Transverse colon (tissue), 4 donors: ENCODE measurements at regions of chr1 and their contacts with region 1.

Region 1: DNA sequence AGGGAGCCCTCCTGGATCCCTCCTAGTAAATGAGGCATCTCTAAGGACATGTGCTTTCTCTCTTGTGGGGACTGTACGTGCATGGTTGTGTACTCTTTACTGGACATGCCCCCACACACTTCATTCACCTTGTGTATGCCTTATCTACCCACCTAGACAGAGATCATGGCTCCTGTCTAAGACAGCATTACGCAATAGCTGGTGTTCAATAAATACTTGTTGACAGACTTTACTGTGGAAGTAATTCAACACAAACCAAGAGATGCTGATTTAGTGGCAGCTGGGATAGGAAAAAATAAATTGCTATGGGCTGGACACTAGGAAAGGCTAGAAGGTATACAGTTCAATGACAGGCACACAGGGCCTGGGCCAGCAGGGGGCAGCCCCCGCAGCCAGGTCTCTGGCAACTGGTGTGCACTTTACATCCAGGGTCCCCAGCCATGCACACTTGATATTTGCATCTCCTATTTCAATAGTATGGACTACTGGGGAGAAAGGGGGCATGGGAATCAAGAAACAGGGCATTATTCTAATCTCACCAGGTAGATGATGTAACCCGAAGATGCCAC is 24.2 kb downstream of the TRABD2B start:
- DNase-seq: no peak
- H3K4me3 ChIP-seq: no peak overlapping the region
- H3K27ac ChIP-seq: no peak overlapping the region
- H3K4me1 ChIP-seq: no peaks in the 10 kb centered on the region
- H3K27me3 ChIP-seq: no peaks in the 10 kb centered on the region
- CTCF ChIP-seq: no peak
- EP300 ChIP-seq: no peak
- POLR2A ChIP-seq: no peak

Region 2: GRCh38 chr1:47871799-47872353 is 101.1 kb before region 1 on chr1:
- in situ Hi-C with region 1: no loop called
- intact Hi-C with region 1: no loop called
- DNase-seq: no peak
- H3K4me3 ChIP-seq: no peak overlapping the region
- H3K27ac ChIP-seq: no peak overlapping the region
- H3K4me1 ChIP-seq: peaks cover 0 to 13% (median 0%) of the 10 kb centered on the region in 4 donors
- H3K27me3 ChIP-seq: no peaks in the 10 kb centered on the region
- CTCF ChIP-seq: no peak
- EP300 ChIP-seq: no peak
- POLR2A ChIP-seq: no peak

Region 3: GRCh38 chr1:47951545-47952234 is 21.3 kb before region 1 on chr1:
- in situ Hi-C with region 1: no loop called
- intact Hi-C with region 1: no loop called
- DNase-seq: no peak
- H3K4me3 ChIP-seq: no peak overlapping the region
- H3K27ac ChIP-seq: no peak overlapping the region
- H3K4me1 ChIP-seq: peaks cover 0 to 7% (median 0%) of the 10 kb centered on the region in 4 donors
- H3K27me3 ChIP-seq: no peaks in the 10 kb centered on the region
- CTCF ChIP-seq: no peak
- EP300 ChIP-seq: no peak
- POLR2A ChIP-seq: no peak

Region 4: DNA sequence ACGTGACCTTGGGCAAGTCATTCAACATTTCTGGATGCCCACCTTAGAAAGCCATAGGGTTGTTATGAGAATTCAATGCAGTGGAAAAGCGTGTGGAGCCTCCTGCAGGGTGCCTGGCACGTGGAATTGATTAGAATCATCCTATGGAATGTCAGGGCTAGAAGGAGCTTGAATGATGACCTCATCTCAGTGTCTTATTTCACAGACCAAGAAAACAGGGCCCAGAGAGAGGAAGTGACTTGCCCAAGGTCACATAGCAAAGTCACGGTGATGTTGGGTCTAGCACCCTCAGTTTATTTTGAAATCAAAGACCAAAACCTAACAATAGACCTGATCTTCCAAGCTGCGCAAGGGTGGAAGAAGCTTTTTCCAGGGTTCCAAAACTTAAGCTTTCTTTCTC is 18.2 kb after region 1 on chr1:
- in situ Hi-C with region 1: no loop called
- intact Hi-C with region 1: loop called (anchors 1 kb)
- DNase-seq: no peak
- H3K4me3 ChIP-seq: no peak overlapping the region
- H3K27ac ChIP-seq: no peak overlapping the region
- H3K4me1 ChIP-seq: peaks cover 0 to 4% (median 0%) of the 10 kb centered on the region in 4 donors
- H3K27me3 ChIP-seq: peaks cover 14% of the 10 kb centered on the region
- CTCF ChIP-seq: no peak
- EP300 ChIP-seq: no peak
- POLR2A ChIP-seq: no peak